ENCODE measurements at regions of chr20 and their contacts with region 1.

Region 1: GRCh38 chr20:25508078-25508770 is 77.1 kb downstream of the NINL start:
- DNase-seq: no peak
- H3K4me3 ChIP-seq: no peak overlapping the region
- H3K27ac ChIP-seq: peak overlapping the region; percentile 63 to 70
- H3K4me1 ChIP-seq: peaks cover 4 to 10% of the 10 kb centered on the region in 2 donors
- H3K27me3 ChIP-seq: no peaks in the 10 kb centered on the region
- CTCF ChIP-seq: no peak

Region 2: DNA sequence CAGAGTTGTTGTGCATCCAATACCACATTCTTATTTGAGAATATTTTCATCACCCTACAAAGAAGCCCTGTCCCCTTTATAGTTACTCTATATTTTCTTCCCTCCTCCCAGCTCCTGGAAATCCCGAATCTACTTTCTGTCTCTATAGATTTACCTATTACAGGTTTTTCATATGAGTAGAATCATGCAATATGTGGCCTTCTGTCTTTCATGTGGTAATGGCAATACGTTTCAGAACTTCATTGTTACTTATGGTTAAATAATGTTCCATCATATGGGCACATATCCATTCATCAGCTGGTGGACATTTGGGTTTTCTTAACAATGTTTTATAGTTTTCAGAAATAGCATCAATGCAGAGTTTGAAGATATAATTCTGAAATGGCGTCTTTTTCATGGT is 83.7 kb before region 1 on chr20:
- intact Hi-C with region 1: no loop called
- DNase-seq: no peak
- H3K4me3 ChIP-seq: no peak overlapping the region
- H3K27ac ChIP-seq: no peak overlapping the region
- H3K4me1 ChIP-seq: no peaks in the 10 kb centered on the region
- H3K27me3 ChIP-seq: no peaks in the 10 kb centered on the region
- CTCF ChIP-seq: no peak

Region 3: GRCh38 chr20:25525295-25526266 is 17.4 kb after region 1 on chr20:
- intact Hi-C with region 1: loop called (anchors 2 kb)
- DNase-seq: peak; percentile 49 to 87
- H3K4me3 ChIP-seq: peak overlapping the region in 1 of 2 donors; percentile 2
- H3K27ac ChIP-seq: peak overlapping the region; percentile 88 to 89
- H3K4me1 ChIP-seq: peaks cover 8 to 15% of the 10 kb centered on the region in 2 donors
- H3K27me3 ChIP-seq: no peaks in the 10 kb centered on the region
- CTCF ChIP-seq: no peak

Region 4: DNA sequence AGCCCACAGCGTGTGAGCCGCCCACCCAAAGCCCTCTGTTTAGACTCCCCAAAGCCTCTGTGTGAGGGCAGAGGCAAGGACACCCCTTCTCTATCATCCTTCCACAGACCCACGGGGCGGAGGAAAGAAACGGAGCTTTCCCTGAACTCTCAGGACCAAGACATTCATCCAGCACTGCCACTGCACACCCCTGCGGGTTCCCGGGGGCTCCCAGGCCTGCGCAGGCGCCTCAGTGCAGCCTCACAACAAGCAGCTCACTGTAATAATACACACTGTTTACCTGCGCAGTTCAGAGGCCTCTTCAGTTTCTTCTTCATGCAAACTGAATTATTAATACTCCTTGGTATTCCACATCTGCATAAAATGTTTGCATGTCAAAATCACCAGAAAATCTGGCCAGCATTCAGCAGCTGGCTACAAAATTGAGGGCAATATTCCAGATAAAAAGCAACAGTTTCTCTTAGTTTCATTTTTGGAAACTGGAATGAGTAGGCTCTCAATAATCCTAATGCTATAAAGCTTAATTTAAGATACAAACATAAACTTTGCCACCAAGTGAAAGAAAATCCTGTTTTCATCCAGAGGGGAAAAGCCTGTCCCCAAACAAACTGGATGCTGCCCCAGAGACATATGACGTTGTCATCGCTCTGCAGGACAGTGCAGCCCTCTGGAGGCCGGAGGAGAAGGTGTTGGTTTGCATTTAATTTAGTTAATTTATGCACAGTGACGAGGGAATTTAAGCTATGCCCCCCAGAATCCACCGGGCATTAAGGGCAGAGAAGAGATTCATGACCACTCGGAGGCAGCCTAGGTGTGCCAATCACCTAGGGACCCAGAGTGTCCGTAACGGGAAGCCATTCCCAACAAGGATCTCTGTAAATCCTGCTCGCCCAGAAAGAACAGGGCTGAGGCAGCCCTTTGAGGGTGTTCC is 31.8 kb after region 1 on chr20:
- intact Hi-C with region 1: loop called (anchors 2 kb)
- DNase-seq: no peak
- H3K4me3 ChIP-seq: peak overlapping the region; percentile 36 to 63
- H3K27ac ChIP-seq: peak overlapping the region; percentile 45 to 65
- H3K4me1 ChIP-seq: peaks cover 8 to 34% of the 10 kb centered on the region in 2 donors
- H3K27me3 ChIP-seq: no peaks in the 10 kb centered on the region
- CTCF ChIP-seq: peak; percentile 31 to 61 (median 42)

Region 5: DNA sequence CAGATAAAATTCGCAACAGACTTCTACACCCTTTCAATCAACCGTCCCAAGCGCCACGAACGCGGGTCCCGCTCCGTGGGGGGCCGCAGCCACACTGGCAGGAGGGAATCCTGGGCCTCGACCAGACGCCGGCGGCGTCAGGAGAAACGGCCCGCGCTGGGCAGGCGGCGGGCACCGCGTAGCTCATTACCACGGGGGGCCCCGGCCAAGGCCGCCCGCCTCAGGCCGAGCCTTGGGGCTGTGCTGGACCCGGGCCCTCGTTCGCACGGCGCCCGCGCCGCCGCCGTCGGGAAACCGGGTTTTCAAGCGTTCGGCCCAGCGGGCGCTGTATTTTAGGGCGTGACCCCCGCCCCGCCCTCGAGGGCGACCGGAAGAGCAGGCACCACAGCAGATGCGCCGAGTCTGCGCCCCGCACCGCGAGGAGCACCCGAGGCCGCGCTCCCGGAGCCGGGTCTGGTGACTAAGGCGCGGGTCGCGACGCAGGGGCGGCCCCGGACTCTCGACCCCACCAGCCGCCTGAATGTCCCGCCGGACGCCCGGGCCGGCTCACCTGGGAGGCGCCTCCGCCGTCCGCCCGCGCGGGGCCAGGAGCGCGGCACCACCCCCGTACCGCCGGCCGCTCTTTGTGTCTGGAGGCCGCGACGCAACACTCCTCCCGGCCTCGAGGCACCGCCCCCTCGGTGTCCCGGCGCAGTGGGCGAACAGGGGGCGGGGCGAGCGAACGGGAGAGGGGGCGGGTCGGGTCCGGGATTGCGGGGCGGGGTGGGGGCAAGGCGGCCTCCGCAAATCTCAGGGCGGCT is 76.9 kb after region 1 on chr20 and contains the start of gene NINL:
- intact Hi-C with region 1: no loop called
- DNase-seq: peak in 1 of 2 donors; percentile 78
- H3K4me3 ChIP-seq: peak within 1 kb of the TSS; percentile 68 to 76
- H3K27ac ChIP-seq: peak within 1 kb of the TSS; percentile 38 to 50
- H3K4me1 ChIP-seq: no peaks in the 10 kb centered on the region
- H3K27me3 ChIP-seq: no peaks in the 10 kb centered on the region
- CTCF ChIP-seq: no peak
- total RNA-seq, gene NINL: 18.0 TPM

Measured in ascending aorta (tissue), 2 donors.